ENCODE measurements at regions of chr11 and their contacts with region 1.

Region 1: GRCh38 chr11:64110465-64111375 is 55.2 kb downstream of the MACROD1 start:
- DNase-seq: no peak
- H3K4me3 ChIP-seq: no peak overlapping the region
- H3K27ac ChIP-seq: peak overlapping the region in 1 of 2 experiments; percentile 62; a peak in 1 of 4 replicates
- H3K4me1 ChIP-seq: peaks cover 0 to 41% of the 10 kb centered on the region in 2 experiments; a peak in 1 of 4 replicates
- H3K27me3 ChIP-seq: no peaks in the 10 kb centered on the region
- CTCF ChIP-seq: no peak
- EP300 ChIP-seq: no peak
- RAD21 ChIP-seq: no peak

Region 2: DNA sequence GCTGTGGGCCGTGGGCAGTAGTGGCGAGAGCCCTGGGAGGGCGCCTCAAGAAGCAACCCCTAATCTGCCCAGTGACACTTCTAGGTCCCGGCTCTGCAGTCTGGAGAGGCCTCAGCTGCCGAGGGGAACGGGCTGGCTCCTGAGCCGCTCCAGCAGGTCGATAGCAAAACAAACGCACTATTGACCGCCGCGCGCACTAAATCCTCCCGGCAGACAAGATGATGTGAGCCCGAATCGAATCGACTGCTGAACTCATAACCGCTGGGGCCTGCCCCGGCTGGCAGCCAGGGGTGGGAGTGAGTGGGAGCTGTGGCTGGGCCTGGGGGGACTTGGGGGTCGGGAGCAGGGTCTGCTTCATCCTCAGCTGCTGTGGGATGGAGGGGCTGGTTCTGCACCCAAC is 38.9 kb before region 1 on chr11:
- CTCF ChIA-PET with region 1: no interaction called
- POLR2A ChIA-PET with region 1: no interaction called
- DNase-seq: no peak
- H3K4me3 ChIP-seq: no peak overlapping the region
- H3K27ac ChIP-seq: peak overlapping the region in 1 of 2 experiments; percentile 81; a peak in 1 of 4 replicates
- H3K4me1 ChIP-seq: peaks cover 0 to 91% of the 10 kb centered on the region in 2 experiments; a peak in 2 of 4 replicates
- H3K27me3 ChIP-seq: no peaks in the 10 kb centered on the region
- CTCF ChIP-seq: no peak
- EP300 ChIP-seq: no peak
- RAD21 ChIP-seq: no peak

Region 3: GRCh38 chr11:64100360-64100759 is 10.4 kb before region 1 on chr11:
- CTCF ChIA-PET with region 1: interaction called, 10 read pairs
- POLR2A ChIA-PET with region 1: no interaction called
- DNase-seq: no peak
- H3K4me3 ChIP-seq: no peak overlapping the region
- H3K27ac ChIP-seq: peak overlapping the region in 1 of 2 experiments; percentile 93; a peak in 1 of 4 replicates
- H3K4me1 ChIP-seq: peaks cover 0 to 94% of the 10 kb centered on the region in 2 experiments; a peak in 2 of 4 replicates
- H3K27me3 ChIP-seq: no peaks in the 10 kb centered on the region
- CTCF ChIP-seq: 0 out of 2 replicates have a peak, but pooled peaks have one; percentile 17
- EP300 ChIP-seq: no peak
- RAD21 ChIP-seq: no peak

Region 4: GRCh38 chr11:64372802-64373597 is 262.3 kb after region 1 on chr11:
- CTCF ChIA-PET with region 1: no interaction called
- POLR2A ChIA-PET with region 1: no interaction called
- DNase-seq: peak; percentile 90
- H3K4me3 ChIP-seq: peak overlapping the region; percentile 60 to 70
- H3K27ac ChIP-seq: peak overlapping the region; percentile 60 to 90
- H3K4me1 ChIP-seq: peaks cover 0 to 11% of the 10 kb centered on the region in 2 experiments; a peak in 1 of 4 replicates
- H3K27me3 ChIP-seq: no peaks in the 10 kb centered on the region
- CTCF ChIP-seq: no peak
- EP300 ChIP-seq: no peak
- RAD21 ChIP-seq: no peak

Measured in SK-N-SH (cell line).